HEK293 (cell line): ENCODE measurements at regions of chr6 and their contacts with region 1.

Region 1: GRCh38 chr6:87701676-87702588 is at the start of gene AKIRIN2:
- H3K4me3 ChIP-seq: peak within 1 kb of the TSS; percentile 93
- H3K27ac ChIP-seq: peak within 1 kb of the TSS; percentile 97
- H3K4me1 ChIP-seq: peaks cover 10% of the 10 kb centered on the region
- CTCF ChIP-seq: no peak

Region 2: GRCh38 chr6:87589693-87590549 is 112.0 kb before region 1 on chr6 and contains the starts of genes ORC3 and RARS2:
- CTCF ChIA-PET with region 1: interaction called, 3 read pairs
- POLR2A ChIA-PET with region 1: interaction called, 13 read pairs
- H3K4me3 ChIP-seq: peak within 1 kb of the TSS; percentile 90
- H3K27ac ChIP-seq: peak within 1 kb of the TSS; percentile 66
- H3K4me1 ChIP-seq: peaks cover 4% of the 10 kb centered on the region; the same call in 1 of the 2 replicates
- CTCF ChIP-seq: no peak

Region 3: GRCh38 chr6:87641065-87641692 is 60.8 kb before region 1 on chr6:
- CTCF ChIA-PET with region 1: no interaction called
- POLR2A ChIA-PET with region 1: no interaction called
- H3K4me3 ChIP-seq: no peak overlapping the region
- H3K27ac ChIP-seq: no peak overlapping the region
- H3K4me1 ChIP-seq: no peaks in the 10 kb centered on the region
- CTCF ChIP-seq: no peak

Region 4: DNA sequence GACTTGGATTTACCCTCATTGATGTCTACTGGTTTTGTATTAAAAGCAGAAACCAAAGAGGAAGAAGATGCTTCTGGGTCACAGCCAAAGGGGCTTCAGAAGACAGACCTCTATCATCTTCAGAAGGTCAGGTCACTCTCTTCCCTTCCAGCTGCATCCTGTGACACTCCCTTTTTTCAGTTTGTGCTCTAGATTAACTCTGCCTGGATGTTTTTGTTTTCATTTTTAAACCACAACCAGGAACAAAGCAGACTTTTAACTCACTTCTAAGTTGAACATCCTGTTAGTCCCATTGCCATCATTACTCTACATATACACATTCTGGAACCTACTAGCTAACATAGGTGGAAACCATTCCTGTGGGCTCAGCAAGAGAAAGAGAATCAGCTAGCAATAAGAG is 45.1 kb before region 1 on chr6:
- CTCF ChIA-PET with region 1: no interaction called
- POLR2A ChIA-PET with region 1: no interaction called
- H3K4me3 ChIP-seq: no peak overlapping the region
- H3K27ac ChIP-seq: no peak overlapping the region
- H3K4me1 ChIP-seq: no peaks in the 10 kb centered on the region
- CTCF ChIP-seq: no peak

Region 5: GRCh38 chr6:87682310-87682709 is 19.6 kb before region 1 on chr6:
- CTCF ChIA-PET with region 1: interaction called, 4 read pairs
- POLR2A ChIA-PET with region 1: interaction called, 10 read pairs
- H3K4me3 ChIP-seq: no peak overlapping the region
- H3K27ac ChIP-seq: no peak overlapping the region
- H3K4me1 ChIP-seq: peaks cover 20% of the 10 kb centered on the region
- CTCF ChIP-seq: no peak